HepG2 (cell line): ENCODE measurements at regions of chr5 and their contacts with region 1.

Region 1: GRCh38 chr5:99060306-99061261 is 131.8 kb upstream of the CHD1 start:
- DNase-seq: peak; percentile 46
- ATAC-seq: peak; percentile 53
- H3K4me3 ChIP-seq: no peak overlapping the region
- H3K27ac ChIP-seq: no peak overlapping the region
- H3K4me1 ChIP-seq: peaks cover 23% of the 10 kb centered on the region
- H3K27me3 ChIP-seq: no peaks in the 10 kb centered on the region
- CTCF ChIP-seq: peak; percentile 76
- EP300 ChIP-seq: no peak
- POLR2A ChIP-seq: no peak
- RAD21 ChIP-seq: peak; percentile 42; the same call in 1 of the 2 replicates

Region 2: GRCh38 chr5:98839469-98840383 is 220.9 kb before region 1 on chr5:
- CTCF ChIA-PET with region 1: interaction called, 7 read pairs
- POLR2A ChIA-PET with region 1: no interaction called
- in situ Hi-C with region 1: no loop called
- intact Hi-C with region 1: loop called (anchors 2 kb)
- DNase-seq: peak; percentile 7
- ATAC-seq: peak; percentile 90
- H3K4me3 ChIP-seq: no peak overlapping the region; a peak in 1 of 6 replicates
- H3K27ac ChIP-seq: no peak overlapping the region
- H3K4me1 ChIP-seq: no peaks in the 10 kb centered on the region
- H3K27me3 ChIP-seq: no peaks in the 10 kb centered on the region; a peak in 1 of 5 replicates
- CTCF ChIP-seq: peak; percentile 60
- EP300 ChIP-seq: no peak
- POLR2A ChIP-seq: no peak
- RAD21 ChIP-seq: no peak

Region 3: GRCh38 chr5:98905857-98906690 is 154.5 kb before region 1 on chr5:
- CTCF ChIA-PET with region 1: interaction called, 28 read pairs
- POLR2A ChIA-PET with region 1: no interaction called
- in situ Hi-C with region 1: no loop called
- intact Hi-C with region 1: loop called (anchors 1 kb)
- DNase-seq: peak; percentile 44
- ATAC-seq: peak; percentile 26; the same call in 1 of the 3 replicates
- H3K4me3 ChIP-seq: no peak overlapping the region
- H3K27ac ChIP-seq: no peak overlapping the region
- H3K4me1 ChIP-seq: no peaks in the 10 kb centered on the region
- H3K27me3 ChIP-seq: no peaks in the 10 kb centered on the region
- CTCF ChIP-seq: peak; percentile 56
- EP300 ChIP-seq: no peak
- POLR2A ChIP-seq: no peak
- RAD21 ChIP-seq: peak; percentile 56; the same call in 1 of the 2 replicates